ENCODE measurements at regions of chr6 and their contacts with region 1.

Region 1: DNA sequence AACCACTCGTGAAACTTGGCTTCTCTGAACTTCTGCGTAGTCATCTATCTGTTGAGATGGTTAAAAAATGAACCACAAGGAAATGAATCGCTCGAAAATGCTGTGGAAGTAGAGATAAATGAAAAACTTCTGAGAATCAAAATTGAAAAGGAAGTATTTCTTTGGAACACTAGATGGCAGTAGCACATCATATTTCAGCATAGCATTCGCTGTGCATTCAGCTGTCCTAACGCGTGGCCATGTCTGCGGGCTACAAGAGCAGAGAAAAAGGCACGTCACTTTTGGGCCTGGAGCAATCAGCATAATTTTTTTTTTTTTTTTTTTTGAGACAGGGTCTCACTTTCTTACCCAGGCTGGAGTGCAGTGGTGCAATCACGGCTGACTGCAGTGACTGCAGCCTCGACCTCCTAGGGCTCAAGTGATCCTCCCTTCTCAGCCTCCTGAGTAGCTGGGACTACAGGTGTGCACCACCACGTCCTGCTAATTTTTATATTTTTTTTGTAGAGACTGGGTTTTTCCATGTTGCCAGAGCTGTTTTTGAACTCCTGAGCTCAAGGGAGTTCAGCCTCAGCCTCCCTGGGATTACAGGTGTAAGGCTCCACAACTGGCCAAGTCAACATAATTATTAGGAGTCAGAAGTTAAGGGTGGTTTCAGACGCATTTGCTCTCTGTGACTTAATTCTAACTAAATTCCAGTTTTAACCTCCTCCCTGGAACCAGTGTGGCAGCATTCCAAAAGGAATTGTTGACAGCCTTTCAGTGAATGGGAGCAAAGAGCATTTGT is 8.8 kb upstream of the PERP start:
- DNase-seq: peak; percentile 67 to 73
- H3K4me3 ChIP-seq: no peak overlapping the region
- H3K4me3 Mint-ChIP-seq: no peak overlapping the region
- H3K27ac Mint-ChIP-seq: peak overlapping the region; percentile 1
- H3K4me1 ChIP-seq: peaks cover 13% of the 10 kb centered on the region; the same call in 1 of the 2 replicates
- H3K4me1 Mint-ChIP-seq: peaks cover 7% of the 10 kb centered on the region
- H3K27me3 ChIP-seq: no peaks in the 10 kb centered on the region
- H3K27me3 Mint-ChIP-seq: no peaks in the 10 kb centered on the region
- CTCF ChIP-seq: peak; percentile 55 to 58

Region 2: DNA sequence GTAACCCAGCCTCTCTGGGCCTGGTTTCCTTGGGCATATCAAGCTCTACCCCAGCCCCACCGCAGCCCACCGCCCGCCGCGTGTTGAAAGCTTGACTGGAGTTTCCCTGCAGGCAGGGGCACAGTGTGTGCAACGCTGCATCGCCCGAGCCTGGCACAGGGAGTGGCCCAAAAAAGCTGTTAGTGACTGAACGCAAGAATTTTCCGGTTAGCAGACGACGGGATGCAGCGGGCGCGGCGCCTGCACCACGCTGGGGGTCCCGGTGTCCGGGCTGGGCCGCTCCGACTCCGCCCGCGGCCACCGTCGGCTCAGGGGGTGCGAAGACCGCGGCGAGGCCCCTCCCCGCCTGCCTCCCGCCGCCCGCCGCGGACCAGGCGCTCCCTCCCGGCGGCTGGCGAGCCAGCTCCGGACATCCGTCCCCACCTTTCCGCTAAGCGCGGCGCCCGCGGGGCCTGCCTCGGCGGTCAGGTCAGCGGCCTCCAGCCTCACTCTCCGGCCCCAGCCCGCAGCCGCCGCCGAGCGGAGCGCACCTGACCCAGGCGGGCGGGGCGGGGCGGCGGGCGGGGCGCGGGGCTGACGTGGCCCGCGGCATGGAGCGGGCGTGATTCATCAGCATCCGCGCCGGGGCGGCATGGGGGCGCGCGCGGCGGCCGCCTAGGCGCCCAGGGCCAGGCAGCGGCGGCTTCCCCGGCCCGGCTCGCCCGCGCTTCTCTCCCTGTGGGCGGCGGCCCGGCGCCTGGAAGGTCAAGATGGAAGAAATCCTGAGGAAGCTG is 45.5 kb after region 1 on chr6 and contains the start of gene ARFGEF3:
- CTCF ChIA-PET with region 1: no interaction called
- POLR2A ChIA-PET with region 1: no interaction called
- intact Hi-C with region 1: loop called (anchors 1 kb)
- DNase-seq: peak; percentile 61 to 80
- H3K4me3 ChIP-seq: peak within 1 kb of the TSS; percentile 68
- H3K4me3 Mint-ChIP-seq: peak within 1 kb of the TSS; percentile 71
- H3K27ac Mint-ChIP-seq: no peak within 1 kb of the TSS
- H3K4me1 ChIP-seq: 0 out of 2 replicates have a peak, but pooled peaks cover 5% of the 10 kb centered on the region
- H3K4me1 Mint-ChIP-seq: peaks cover 7% of the 10 kb centered on the region
- H3K27me3 ChIP-seq: 0 out of 2 replicates have a peak, but pooled peaks cover 1% of the 10 kb centered on the region
- H3K27me3 Mint-ChIP-seq: peaks cover 15% of the 10 kb centered on the region
- CTCF ChIP-seq: no peak
- total RNA-seq, gene ARFGEF3: 5.2 and 5.6 TPM in 2 replicates

Region 3: DNA sequence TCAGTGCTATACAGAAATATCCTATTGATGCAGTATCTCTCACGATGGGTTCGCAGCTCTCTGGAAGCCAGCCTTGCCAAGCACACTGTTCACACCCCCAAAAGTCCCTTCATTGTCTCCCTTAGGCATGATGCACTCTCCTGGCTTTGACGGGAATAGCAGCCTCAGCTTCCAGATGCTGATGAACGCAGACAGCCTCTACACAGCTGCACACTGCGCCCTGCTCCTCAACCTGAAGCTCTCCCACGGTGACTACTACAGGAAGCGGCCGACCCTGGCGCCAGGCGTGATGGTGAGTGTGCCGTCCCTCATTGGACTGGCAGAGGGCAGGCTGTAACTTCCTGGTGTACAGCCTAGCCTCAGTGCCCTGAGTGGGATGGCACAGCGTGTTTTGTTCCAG is 162.3 kb after region 1 on chr6:
- CTCF ChIA-PET with region 1: interaction called, 22 read pairs
- POLR2A ChIA-PET with region 1: no interaction called
- intact Hi-C with region 1: loop called (anchors 1 kb)
- DNase-seq: peak; percentile 43 to 53
- H3K4me3 ChIP-seq: no peak overlapping the region
- H3K4me3 Mint-ChIP-seq: no peak overlapping the region
- H3K27ac Mint-ChIP-seq: no peak overlapping the region
- H3K4me1 ChIP-seq: no peaks in the 10 kb centered on the region
- H3K4me1 Mint-ChIP-seq: no peaks in the 10 kb centered on the region
- H3K27me3 ChIP-seq: no peaks in the 10 kb centered on the region
- H3K27me3 Mint-ChIP-seq: no peaks in the 10 kb centered on the region
- CTCF ChIP-seq: peak; percentile 28 to 75

Region 4: GRCh38 chr6:138403801-138404661 is 288.0 kb after region 1 on chr6 and contains the start of gene HEBP2:
- CTCF ChIA-PET with region 1: interaction called, 11 read pairs
- POLR2A ChIA-PET with region 1: no interaction called
- intact Hi-C with region 1: loop called (anchors 1 kb)
- DNase-seq: peak; percentile 99
- H3K4me3 ChIP-seq: peak within 1 kb of the TSS; percentile 81
- H3K4me3 Mint-ChIP-seq: peak within 1 kb of the TSS; percentile 81
- H3K27ac Mint-ChIP-seq: peak within 1 kb of the TSS; percentile 81
- H3K4me1 ChIP-seq: peaks cover 11% of the 10 kb centered on the region; the same call in 1 of the 2 replicates
- H3K4me1 Mint-ChIP-seq: no peaks in the 10 kb centered on the region
- H3K27me3 ChIP-seq: no peaks in the 10 kb centered on the region
- H3K27me3 Mint-ChIP-seq: no peaks in the 10 kb centered on the region
- CTCF ChIP-seq: peak; percentile 53 to 65
- total RNA-seq, gene HEBP2: 64.3 and 73.1 TPM in 2 replicates

Region 5: GRCh38 chr6:138588805-138589434 is 472.9 kb after region 1 on chr6:
- CTCF ChIA-PET with region 1: interaction called, 4 read pairs
- POLR2A ChIA-PET with region 1: no interaction called
- intact Hi-C with region 1: loop called (anchors 2 kb)
- DNase-seq: peak; percentile 58 to 69
- H3K4me3 ChIP-seq: no peak overlapping the region
- H3K4me3 Mint-ChIP-seq: no peak overlapping the region
- H3K27ac Mint-ChIP-seq: peak overlapping the region; percentile 37
- H3K4me1 ChIP-seq: peaks cover 18% of the 10 kb centered on the region; the same call in 1 of the 2 replicates
- H3K4me1 Mint-ChIP-seq: peaks cover 33% of the 10 kb centered on the region
- H3K27me3 ChIP-seq: no peaks in the 10 kb centered on the region
- H3K27me3 Mint-ChIP-seq: no peaks in the 10 kb centered on the region
- CTCF ChIP-seq: peak; percentile 90 to 91